ENCODE measurements at regions of chr13 and their contacts with region 1.

Region 1: DNA sequence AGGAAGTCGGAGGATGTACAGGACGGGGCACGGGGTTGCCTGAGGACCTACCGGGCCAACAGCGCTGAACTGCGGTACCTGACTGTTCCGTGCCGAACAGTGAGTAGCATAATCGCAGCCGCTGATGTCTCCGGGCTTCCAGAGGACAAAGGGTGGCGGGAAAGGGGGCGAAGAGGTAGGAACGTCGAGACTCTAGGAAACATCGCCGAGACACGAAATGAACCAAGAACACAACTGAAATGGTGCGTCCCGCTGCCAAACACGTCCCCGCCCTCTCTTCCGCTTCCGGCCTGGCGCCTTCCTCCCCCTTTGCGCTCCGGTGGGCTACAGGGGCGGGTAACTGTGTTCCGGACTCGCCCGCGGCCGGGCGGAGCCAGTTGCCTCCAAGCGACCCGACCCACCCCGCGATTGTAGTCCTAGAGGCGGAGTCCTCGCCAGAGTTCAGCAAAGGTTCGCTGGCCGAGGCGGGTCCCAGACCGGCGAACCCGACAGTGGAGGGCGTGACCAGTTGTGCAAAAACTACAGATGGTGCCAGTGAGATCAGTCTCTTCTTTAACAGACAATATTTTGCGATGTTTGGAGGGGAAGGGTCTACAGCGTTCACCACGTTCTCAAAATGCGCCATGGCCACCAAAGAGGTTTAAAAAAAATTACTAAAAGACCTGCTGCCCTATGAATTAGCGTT is at the start of gene MRPS31:
- DNase-seq: peak; percentile 93
- H3K4me3 ChIP-seq: peak within 1 kb of the TSS; percentile 71 to 91 (median 77)
- H3K27ac ChIP-seq: peak within 1 kb of the TSS; percentile 75
- H3K4me1 ChIP-seq: peaks cover 6% of the 10 kb centered on the region
- H3K27me3 ChIP-seq: no peaks in the 10 kb centered on the region
- CTCF ChIP-seq: no peak
- POLR2A ChIP-seq: peak; percentile 88
- total RNA-seq, gene MRPS31: 17.8 and 19.9 TPM in 2 replicates

Region 2: GRCh38 chr13:39037880-39038568 is 1733.1 kb before region 1 on chr13 and contains the starts of genes NHLRC3 and PROSER1:
- CTCF ChIA-PET with region 1: no interaction called
- POLR2A ChIA-PET with region 1: no interaction called
- dilution Hi-C with region 1: no loop called
- intact Hi-C with region 1: loop called (anchors 10 kb)
- DNase-seq: peak; percentile 89
- H3K4me3 ChIP-seq: peak within 1 kb of the TSS; percentile 75 to 98 (median 94)
- H3K27ac ChIP-seq: peak within 1 kb of the TSS; percentile 86
- H3K4me1 ChIP-seq: peaks cover 24% of the 10 kb centered on the region
- H3K27me3 ChIP-seq: no peaks in the 10 kb centered on the region
- CTCF ChIP-seq: no peak
- POLR2A ChIP-seq: peak; percentile 45
- total RNA-seq, gene NHLRC3: 10.2 and 11.9 TPM in 2 replicates
- total RNA-seq, gene PROSER1: 40.4 and 44.1 TPM in 2 replicates

Region 3: GRCh38 chr13:39876258-39876657 is 894.8 kb before region 1 on chr13:
- CTCF ChIA-PET with region 1: no interaction called
- POLR2A ChIA-PET with region 1: no interaction called
- dilution Hi-C with region 1: no loop called
- intact Hi-C with region 1: loop called (anchors 10 kb)
- DNase-seq: peak; percentile 90
- H3K4me3 ChIP-seq: no peak overlapping the region
- H3K27ac ChIP-seq: peak overlapping the region; percentile 98
- H3K4me1 ChIP-seq: peaks cover 67% of the 10 kb centered on the region
- H3K27me3 ChIP-seq: no peaks in the 10 kb centered on the region
- CTCF ChIP-seq: no peak
- POLR2A ChIP-seq: peak; percentile 25

Region 4: DNA sequence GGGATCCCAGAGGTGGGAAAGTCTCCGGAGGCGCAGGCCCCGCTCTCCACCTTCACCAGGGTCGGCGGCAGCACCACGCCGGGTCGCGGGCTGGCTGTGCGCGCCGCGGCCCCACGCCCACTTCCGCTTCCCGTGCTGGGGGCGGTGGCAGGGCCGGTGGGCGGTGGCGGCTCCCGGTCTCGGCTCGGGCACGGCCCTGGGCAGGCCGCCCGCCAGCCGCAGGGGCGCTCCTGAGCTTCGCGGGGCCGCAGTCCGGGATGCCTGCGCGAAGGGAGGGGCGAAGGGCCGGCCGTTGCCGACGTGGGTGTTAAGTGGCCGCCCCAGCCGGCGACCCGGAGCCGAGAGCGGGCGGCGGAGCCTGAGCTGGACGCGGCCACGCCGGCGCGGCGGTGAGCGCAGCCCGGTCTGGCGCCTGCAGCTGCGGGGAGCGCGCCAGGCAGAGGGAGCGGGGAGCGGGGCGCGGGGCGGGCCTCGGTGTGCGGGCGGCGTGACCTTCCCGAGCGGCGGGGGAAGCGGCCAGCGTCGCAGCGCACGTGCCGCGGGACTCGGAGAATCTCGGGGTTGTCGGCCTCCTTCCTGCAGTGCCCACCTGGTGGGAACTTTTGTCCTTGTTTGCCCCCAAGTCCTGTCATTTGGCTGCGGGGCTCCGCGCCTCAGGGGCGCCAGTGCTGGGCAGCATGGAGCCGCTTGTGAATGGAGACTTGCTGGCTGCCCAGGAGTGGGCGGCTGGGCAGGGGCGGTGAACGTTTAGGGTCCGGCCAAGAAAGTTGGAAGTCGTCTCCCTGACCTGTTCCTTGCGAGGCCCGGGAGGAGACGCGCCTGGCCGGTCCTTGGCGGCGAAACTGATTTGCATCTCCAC is 18.4 kb after region 1 on chr13 and contains the start of gene SLC25A15:
- CTCF ChIA-PET with region 1: interaction called, 4 read pairs
- POLR2A ChIA-PET with region 1: interaction called, 3 read pairs
- dilution Hi-C with region 1: no loop called
- intact Hi-C with region 1: loop called (anchors 1 kb)
- DNase-seq: peak; percentile 82
- H3K4me3 ChIP-seq: peak within 1 kb of the TSS; percentile 57 to 66 (median 58)
- H3K27ac ChIP-seq: peak within 1 kb of the TSS; percentile 37
- H3K4me1 ChIP-seq: peaks cover 11% of the 10 kb centered on the region
- H3K27me3 ChIP-seq: no peaks in the 10 kb centered on the region
- CTCF ChIP-seq: peak; percentile 17 to 31
- POLR2A ChIP-seq: peak; percentile 77
- total RNA-seq, gene SLC25A15: 10.8 and 11.5 TPM in 2 replicates